Mammary epithelial cell (primary cell): ENCODE measurements at regions of chr3 and their contacts with region 1.

Region 1: DNA sequence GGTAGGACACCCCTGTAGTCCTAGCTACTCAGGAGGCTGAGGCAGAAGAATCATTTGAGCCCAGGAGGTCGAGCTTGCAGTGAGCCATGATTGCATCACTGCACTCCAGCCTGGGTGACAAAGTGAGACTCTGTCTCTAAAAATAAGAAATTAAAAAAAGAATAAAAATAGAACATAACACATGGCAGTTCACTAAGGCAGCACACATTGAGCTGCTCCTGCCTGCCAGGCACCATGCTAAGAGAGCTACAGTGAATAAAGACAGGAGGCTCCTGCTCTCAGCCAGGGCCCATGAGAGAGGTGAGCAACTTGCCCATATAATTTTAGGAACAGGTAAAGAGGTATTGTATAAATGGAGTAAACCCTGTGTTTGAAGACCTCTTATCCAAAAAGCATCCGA is 54.3 kb downstream of the EBLN2 start:
- DNase-seq: no peak
- H3K4me3 ChIP-seq: no peak overlapping the region
- H3K27ac ChIP-seq: no peak overlapping the region
- H3K4me1 ChIP-seq: no peaks in the 10 kb centered on the region
- H3K27me3 ChIP-seq: peaks cover 2% of the 10 kb centered on the region
- CTCF ChIP-seq: no peak

Region 2: GRCh38 chr3:73192035-73192738 is 76.4 kb after region 1 on chr3:
- CTCF ChIA-PET with region 1: no interaction called
- dilution Hi-C with region 1: loop called (anchors 5 kb)
- in situ Hi-C with region 1: no loop called
- intact Hi-C with region 1: no loop called
- DNase-seq: no peak
- H3K4me3 ChIP-seq: no peak overlapping the region
- H3K27ac ChIP-seq: no peak overlapping the region
- H3K4me1 ChIP-seq: no peaks in the 10 kb centered on the region
- H3K27me3 ChIP-seq: no peaks in the 10 kb centered on the region
- CTCF ChIP-seq: peak; percentile 11 to 32

Region 3: DNA sequence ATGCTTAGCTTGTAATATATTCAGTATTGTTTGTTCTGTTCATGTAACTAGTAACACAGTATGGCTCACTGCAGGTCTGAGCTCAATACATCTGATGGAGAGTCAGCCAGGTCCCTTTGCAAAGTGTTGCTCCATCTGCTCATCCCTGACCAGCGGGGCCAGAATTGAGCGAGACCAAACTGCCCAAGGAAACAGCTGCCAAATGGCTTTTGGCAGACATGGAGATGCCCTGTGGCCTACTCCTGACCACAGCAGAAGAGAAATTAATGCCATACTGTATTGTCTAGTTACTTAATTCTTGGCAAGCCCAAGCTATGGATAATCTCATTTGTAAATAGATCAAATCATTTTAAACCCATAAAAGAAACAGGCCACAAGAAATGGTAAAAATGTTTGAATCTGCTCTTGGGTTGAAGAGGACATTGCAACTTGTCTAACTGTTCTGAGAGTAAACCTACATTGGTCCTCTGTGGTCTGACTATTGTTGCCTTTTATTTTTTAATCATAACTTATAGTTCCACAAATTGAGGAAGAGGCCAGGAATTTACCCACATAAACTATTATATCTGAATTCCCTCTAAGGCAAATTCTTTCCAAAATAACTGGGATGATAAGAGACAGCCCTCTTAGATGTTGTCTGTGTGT is 155.2 kb after region 1 on chr3:
- CTCF ChIA-PET with region 1: no interaction called
- dilution Hi-C with region 1: no loop called
- in situ Hi-C with region 1: no loop called
- intact Hi-C with region 1: loop called (anchors 10 kb)
- DNase-seq: no peak
- H3K4me3 ChIP-seq: no peak overlapping the region
- H3K27ac ChIP-seq: no peak overlapping the region
- H3K4me1 ChIP-seq: no peaks in the 10 kb centered on the region
- H3K27me3 ChIP-seq: no peaks in the 10 kb centered on the region
- CTCF ChIP-seq: no peak

Region 4: DNA sequence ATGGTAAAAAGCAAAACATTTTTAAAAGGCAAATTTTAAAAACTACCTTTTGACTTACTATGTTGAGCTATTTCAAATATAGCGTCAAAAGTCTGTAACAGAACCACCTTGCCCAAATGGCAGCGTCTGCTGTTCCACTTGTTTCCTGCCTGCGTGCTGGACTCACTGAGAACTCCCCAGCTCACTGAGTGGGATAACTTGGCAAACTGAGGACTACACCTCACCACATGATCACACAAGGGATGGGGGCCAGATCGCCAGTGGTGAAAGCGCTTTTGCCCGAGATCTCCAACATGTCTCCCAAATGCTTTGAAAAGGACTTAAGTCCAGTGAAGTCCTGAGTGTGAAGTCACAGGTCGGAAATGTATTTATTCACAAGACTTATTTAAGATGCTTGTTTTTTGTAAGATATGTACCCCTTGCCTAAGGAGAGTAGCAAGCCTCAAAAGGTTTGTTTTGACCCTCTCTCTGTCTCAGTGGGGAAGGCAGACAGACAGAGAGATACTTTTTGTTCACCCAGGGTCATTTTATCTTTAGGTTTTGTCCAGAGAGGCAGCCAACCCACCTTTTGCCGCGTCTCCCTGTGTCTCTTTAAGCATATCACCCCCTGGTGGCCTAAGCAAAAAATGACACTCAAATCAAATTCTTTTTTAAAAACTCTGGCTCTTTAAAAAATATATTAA is 316.4 kb after region 1 on chr3:
- CTCF ChIA-PET with region 1: no interaction called
- dilution Hi-C with region 1: no loop called
- in situ Hi-C with region 1: no loop called
- intact Hi-C with region 1: no loop called
- DNase-seq: peak; percentile 28
- H3K4me3 ChIP-seq: no peak overlapping the region
- H3K27ac ChIP-seq: no peak overlapping the region
- H3K4me1 ChIP-seq: no peaks in the 10 kb centered on the region
- H3K27me3 ChIP-seq: no peaks in the 10 kb centered on the region
- CTCF ChIP-seq: peak; percentile 55 to 64